BJ (cell line): ENCODE measurements at regions of chr11 and their contacts with region 1.

Region 1: GRCh38 chr11:32402861-32403260 is 32.5 kb downstream of the WT1 start:
- DNase-seq: no peak
- H3K4me3 ChIP-seq: no peak overlapping the region
- H3K27me3 ChIP-seq: no peaks in the 10 kb centered on the region
- CTCF ChIP-seq: no peak

Region 2: DNA sequence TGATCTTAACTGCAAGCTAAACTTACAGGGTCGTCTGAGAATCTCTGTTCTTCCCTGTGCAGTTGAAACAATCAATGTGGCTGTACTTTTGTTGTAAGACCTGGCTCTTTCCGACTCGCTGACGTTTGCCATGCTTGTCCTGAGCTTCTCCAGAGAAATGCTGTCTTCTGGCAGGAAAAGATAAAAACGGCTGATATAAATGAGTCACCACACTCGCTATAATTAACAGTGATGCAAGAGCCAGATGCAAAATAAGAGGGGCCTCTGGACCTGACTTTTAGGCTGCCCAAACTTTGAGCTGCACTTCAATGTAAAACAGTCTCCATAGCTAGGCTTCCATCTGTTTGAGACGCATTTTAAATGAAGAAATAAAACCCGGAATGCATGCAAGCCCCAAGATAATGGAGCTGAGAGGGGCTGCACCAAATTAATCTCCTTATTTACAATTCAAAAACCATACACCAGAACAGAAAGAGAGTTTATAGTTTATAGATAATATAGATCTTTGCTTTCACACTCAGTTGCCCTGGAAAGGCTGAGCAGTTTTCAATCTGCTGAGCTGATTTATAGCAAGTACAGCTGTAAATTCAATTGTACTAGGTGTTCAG is 16.0 kb before region 1 on chr11:
- CTCF ChIA-PET with region 1: no interaction called
- POLR2A ChIA-PET with region 1: no interaction called
- DNase-seq: no peak
- H3K4me3 ChIP-seq: no peak overlapping the region
- H3K27me3 ChIP-seq: no peaks in the 10 kb centered on the region; the same call in 1 of the 2 replicates
- CTCF ChIP-seq: no peak

Region 3: DNA sequence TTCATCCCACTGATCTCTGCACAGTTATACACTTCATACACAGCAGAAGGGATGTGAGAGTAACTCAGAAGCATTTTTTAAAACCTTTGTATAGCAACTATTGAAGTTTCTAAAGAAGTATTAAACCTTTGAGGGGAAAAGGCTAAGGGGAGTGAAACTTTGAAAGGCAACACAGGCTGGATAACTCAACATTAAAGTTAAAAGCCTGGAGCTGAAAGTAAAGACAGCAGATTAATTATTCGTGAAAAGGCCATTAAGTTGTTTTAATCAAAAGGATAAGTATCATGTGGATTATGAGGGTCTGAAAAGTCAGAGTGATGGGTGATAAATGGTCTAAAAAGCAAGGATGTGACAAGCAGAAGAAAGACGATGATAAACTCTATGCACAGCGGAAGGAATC is 14.9 kb after region 1 on chr11:
- CTCF ChIA-PET with region 1: no interaction called
- POLR2A ChIA-PET with region 1: interaction called, 16 read pairs
- DNase-seq: no peak
- H3K4me3 ChIP-seq: no peak overlapping the region
- H3K27me3 ChIP-seq: no peaks in the 10 kb centered on the region
- CTCF ChIP-seq: no peak

Region 4: DNA sequence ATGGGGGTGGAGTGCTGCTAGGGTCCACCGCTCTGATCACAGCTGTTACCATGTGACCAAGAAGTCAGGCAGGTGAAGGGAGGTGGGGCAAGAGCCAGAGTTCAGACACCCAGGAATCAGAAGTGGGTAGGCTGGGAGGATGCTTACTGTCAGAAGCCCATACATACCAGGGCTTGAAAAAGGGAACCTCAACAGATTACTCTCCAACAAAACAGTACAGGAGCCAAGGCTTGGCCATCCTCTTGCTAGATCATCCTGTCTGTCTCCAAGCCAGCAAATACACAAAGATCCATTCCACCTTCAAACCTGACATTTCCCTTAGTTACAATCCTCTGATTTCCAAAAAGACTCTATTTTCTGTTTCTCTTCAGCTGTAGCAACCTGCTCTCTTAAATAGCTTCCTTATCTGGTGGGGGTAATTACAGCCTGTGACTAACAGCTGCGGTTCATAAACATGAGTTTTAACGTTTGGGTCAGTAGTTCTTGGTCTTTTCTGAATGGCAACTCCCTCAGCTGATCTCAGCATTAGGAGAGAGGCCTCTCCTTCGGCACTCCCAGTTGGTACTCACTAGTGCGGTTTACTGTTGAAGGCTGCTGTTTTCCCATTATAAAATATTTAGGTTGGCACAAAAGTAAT is 63.5 kb after region 1 on chr11:
- CTCF ChIA-PET with region 1: no interaction called
- POLR2A ChIA-PET with region 1: no interaction called
- DNase-seq: no peak
- H3K4me3 ChIP-seq: no peak overlapping the region
- H3K27me3 ChIP-seq: no peaks in the 10 kb centered on the region
- CTCF ChIP-seq: no peak

Region 5: DNA sequence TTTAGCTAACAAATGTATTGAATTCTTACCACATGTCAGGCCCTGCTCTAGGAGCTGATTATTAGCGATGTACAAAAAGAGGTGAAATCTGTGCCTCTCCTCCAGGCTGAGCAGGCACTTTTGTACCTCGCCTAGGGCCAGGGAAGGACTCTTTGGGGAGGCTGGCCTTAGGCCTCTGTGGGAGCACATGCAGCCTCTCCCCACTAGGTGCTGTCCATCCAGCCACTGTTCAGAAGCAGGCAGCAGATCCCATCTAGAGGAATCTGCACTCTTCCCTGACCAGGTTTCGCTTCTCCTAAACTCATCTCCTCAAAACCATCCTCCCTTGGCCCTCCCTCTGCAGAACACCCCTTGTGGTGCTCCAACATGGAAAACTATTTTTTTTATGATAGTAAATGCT is 84.4 kb after region 1 on chr11:
- CTCF ChIA-PET with region 1: no interaction called
- POLR2A ChIA-PET with region 1: no interaction called
- DNase-seq: no peak
- H3K4me3 ChIP-seq: no peak overlapping the region
- H3K27me3 ChIP-seq: no peaks in the 10 kb centered on the region
- CTCF ChIP-seq: 0 out of 2 replicates have a peak, but pooled peaks have one; percentile 17

Region 6: GRCh38 chr11:32500001-32500400 is 97.1 kb after region 1 on chr11:
- CTCF ChIA-PET with region 1: no interaction called
- POLR2A ChIA-PET with region 1: no interaction called
- DNase-seq: no peak
- H3K4me3 ChIP-seq: no peak overlapping the region
- H3K27me3 ChIP-seq: no peaks in the 10 kb centered on the region
- CTCF ChIP-seq: no peak